CD8-positive, alpha-beta T cell (primary cell): ENCODE measurements at regions of chr14 and their contacts with region 1.

Region 1: GRCh38 chr14:30521899-30522736 is 36.8 kb upstream of the G2E3 start:
- DNase-seq: peak in 2 of 9 experiments; percentile 54 to 64
- ATAC-seq: peak; percentile 69
- H3K4me3 ChIP-seq: no peak overlapping the region
- H3K4me3 Mint-ChIP-seq: peak overlapping the region; percentile 19
- H3K27ac ChIP-seq: no peak overlapping the region
- H3K27ac Mint-ChIP-seq: peak overlapping the region; percentile 34
- H3K4me1 ChIP-seq: peaks cover 5% of the 10 kb centered on the region
- H3K4me1 Mint-ChIP-seq: peaks cover 11% of the 10 kb centered on the region
- H3K27me3 ChIP-seq: no peaks in the 10 kb centered on the region
- H3K27me3 Mint-ChIP-seq: no peaks in the 10 kb centered on the region
- CTCF ChIP-seq: peak; percentile 87

Region 2: GRCh38 chr14:29548948-29549370 is 973.2 kb before region 1 on chr14:
- CTCF ChIA-PET with region 1: no interaction called
- POLR2A ChIA-PET with region 1: no interaction called
- intact Hi-C with region 1: loop called in 1 of 2 experiments (anchors 5 kb)
- DNase-seq: peak in 1 of 9 experiments; percentile 0
- ATAC-seq: no peak
- H3K4me3 ChIP-seq: no peak overlapping the region
- H3K4me3 Mint-ChIP-seq: no peak overlapping the region
- H3K27ac ChIP-seq: no peak overlapping the region
- H3K27ac Mint-ChIP-seq: no peak overlapping the region
- H3K4me1 ChIP-seq: no peaks in the 10 kb centered on the region
- H3K4me1 Mint-ChIP-seq: no peaks in the 10 kb centered on the region
- H3K27me3 ChIP-seq: no peaks in the 10 kb centered on the region
- H3K27me3 Mint-ChIP-seq: no peaks in the 10 kb centered on the region
- CTCF ChIP-seq: no peak

Region 3: GRCh38 chr14:30270200-30271161 is 251.6 kb before region 1 on chr14:
- CTCF ChIA-PET with region 1: no interaction called
- POLR2A ChIA-PET with region 1: no interaction called
- intact Hi-C with region 1: no loop called
- DNase-seq: peak; percentile 1 to 49 (median 31)
- ATAC-seq: peak; percentile 51
- H3K4me3 ChIP-seq: no peak overlapping the region
- H3K4me3 Mint-ChIP-seq: peak overlapping the region; percentile 51
- H3K27ac ChIP-seq: no peak overlapping the region
- H3K27ac Mint-ChIP-seq: no peak overlapping the region
- H3K4me1 ChIP-seq: no peaks in the 10 kb centered on the region
- H3K4me1 Mint-ChIP-seq: peaks cover 6% of the 10 kb centered on the region
- H3K27me3 ChIP-seq: no peaks in the 10 kb centered on the region
- H3K27me3 Mint-ChIP-seq: peaks cover 2% of the 10 kb centered on the region
- CTCF ChIP-seq: peak; percentile 35

Region 4: DNA sequence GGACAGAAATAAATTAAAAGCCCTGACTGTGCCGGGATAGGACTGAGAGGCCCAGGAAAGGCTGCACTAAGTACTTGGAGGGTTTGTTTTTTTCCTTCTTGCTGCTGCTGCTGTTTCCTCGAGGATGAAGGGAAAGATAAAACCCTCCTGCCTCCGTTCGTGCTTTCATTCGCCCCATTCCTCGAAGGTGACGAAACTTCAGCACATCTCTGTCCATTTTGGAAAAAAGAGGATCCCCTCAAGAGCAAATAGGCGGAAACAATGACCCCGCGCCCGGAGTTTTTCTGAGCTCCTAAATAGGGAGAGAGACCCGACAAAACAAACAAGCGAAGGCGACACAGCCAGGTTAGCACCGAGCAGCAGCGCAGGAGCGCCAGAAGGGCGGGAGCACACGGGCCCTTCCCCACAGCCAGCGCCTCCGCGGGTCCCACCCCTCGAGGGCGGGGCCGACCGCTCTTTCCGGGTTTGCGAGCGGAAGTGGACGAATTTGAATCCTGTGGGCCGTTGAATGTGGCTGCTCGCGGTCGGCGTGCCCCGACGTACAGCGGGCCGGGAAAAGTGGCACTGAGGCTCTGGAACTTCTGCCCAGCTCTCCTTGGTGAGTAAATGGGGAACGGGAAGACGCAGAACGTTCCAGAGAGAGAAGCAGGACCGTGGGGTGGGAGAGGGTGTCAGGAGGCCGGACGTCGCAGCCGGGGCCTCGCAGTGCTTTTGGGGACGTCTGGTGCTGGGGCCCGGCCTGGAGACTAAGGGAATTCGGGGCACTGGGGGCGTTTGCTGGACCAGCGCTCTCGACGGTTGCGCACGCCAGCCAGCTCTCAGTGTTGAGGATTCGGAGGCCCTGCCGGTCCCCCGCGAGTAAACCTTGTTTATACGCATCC is 36.8 kb after region 1 on chr14 and contains the start of gene G2E3:
- CTCF ChIA-PET with region 1: no interaction called
- POLR2A ChIA-PET with region 1: interaction called, 3 read pairs
- intact Hi-C with region 1: loop called in 1 of 2 experiments (anchors 5 kb)
- DNase-seq: peak; percentile 73 to 92 (median 84)
- ATAC-seq: peak; percentile 99
- H3K4me3 ChIP-seq: peak within 1 kb of the TSS; percentile 91 to 96
- H3K4me3 Mint-ChIP-seq: peak within 1 kb of the TSS; percentile 99
- H3K27ac ChIP-seq: peak within 1 kb of the TSS; percentile 83 to 86
- H3K27ac Mint-ChIP-seq: peak within 1 kb of the TSS; percentile 98
- H3K4me1 ChIP-seq: peaks cover 24% of the 10 kb centered on the region
- H3K4me1 Mint-ChIP-seq: peaks cover 37% of the 10 kb centered on the region
- H3K27me3 ChIP-seq: no peaks in the 10 kb centered on the region
- H3K27me3 Mint-ChIP-seq: no peaks in the 10 kb centered on the region
- CTCF ChIP-seq: no peak
- total RNA-seq, gene G2E3: 25.2 to 34.7 TPM